Esophagus squamous epithelium (tissue), 5 donors: ENCODE measurements at regions of chr16 and their contacts with region 1.

Region 1: GRCh38 chr16:67667817-67668494 is 1.3 kb downstream of the C16orf86 start:
- DNase-seq: peak; percentile 54
- H3K4me3 ChIP-seq: peak overlapping the region in 3 of 4 donors; percentile 72 to 81 (median 73)
- H3K27ac ChIP-seq: peak overlapping the region; percentile 66 to 94 (median 86)
- H3K4me1 ChIP-seq: peaks cover 18 to 51% (median 23%) of the 10 kb centered on the region in 3 donors
- H3K27me3 ChIP-seq: no peaks in the 10 kb centered on the region
- CTCF ChIP-seq: peak; percentile 70 to 93 (median 90)
- POLR2A ChIP-seq: no peak

Region 2: DNA sequence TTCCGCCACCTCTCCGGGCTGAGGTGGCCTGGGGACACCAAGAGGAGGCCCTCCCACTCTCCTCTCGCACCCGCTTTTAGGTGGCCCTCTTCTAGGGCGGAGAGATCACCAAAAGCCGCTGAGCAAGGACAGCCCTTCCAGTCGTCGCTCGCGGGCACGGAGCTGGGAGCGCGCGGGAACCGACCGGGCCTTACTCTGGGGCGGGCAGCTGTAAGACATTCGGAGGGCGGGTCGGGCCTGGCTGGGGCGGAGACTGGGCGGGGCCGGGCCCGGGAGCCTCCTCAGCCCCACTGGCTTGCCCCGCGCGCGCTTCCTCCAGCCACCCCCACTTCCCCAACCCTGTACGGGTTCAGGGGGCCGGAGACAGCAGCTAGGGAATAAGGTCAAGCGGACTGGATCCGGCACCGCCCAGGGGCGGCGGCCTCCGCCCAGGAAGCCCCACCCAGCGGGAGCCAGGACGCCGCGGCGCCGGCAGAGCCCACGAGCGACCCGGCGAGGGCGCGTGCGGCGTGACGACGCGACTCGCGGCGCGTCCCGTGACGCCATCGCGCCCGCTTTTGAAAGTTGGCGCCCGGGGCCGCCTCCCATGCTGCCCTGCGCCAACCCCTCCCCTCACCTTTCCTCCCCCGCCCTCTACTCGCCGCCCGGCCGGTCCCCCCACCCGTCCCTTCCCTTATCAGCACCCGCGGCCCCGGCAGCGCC is 106.0 kb before region 1 on chr16:
- intact Hi-C with region 1: loop called (anchors 10 kb)
- DNase-seq: peak; percentile 87
- H3K4me3 ChIP-seq: peak overlapping the region; percentile 62 to 98 (median 91)
- H3K27ac ChIP-seq: peak overlapping the region; percentile 100
- H3K4me1 ChIP-seq: peaks cover 15 to 59% (median 28%) of the 10 kb centered on the region in 3 donors
- H3K27me3 ChIP-seq: no peaks in the 10 kb centered on the region
- CTCF ChIP-seq: no peak
- POLR2A ChIP-seq: peak in 3 of 4 donors; percentile 18 to 82 (median 33)